MCF 10A (cell line): ENCODE measurements at regions of chr1 and their contacts with region 1.

Region 1: GRCh38 chr1:153967082-153968000 is at the start of gene CREB3L4:
- DNase-seq: peak; percentile 100
- H3K4me3 Mint-ChIP-seq: peak within 1 kb of the TSS; percentile 95
- H3K27ac Mint-ChIP-seq: peak within 1 kb of the TSS; percentile 94
- H3K4me1 Mint-ChIP-seq: peaks cover 40% of the 10 kb centered on the region
- H3K27me3 Mint-ChIP-seq: no peaks in the 10 kb centered on the region
- CTCF ChIP-seq: peak; percentile 32
- total RNA-seq, gene CREB3L4: 14.7 and 17.6 TPM in 2 replicates

Region 2: GRCh38 chr1:153775458-153776327 is 191.6 kb before region 1 on chr1:
- CTCF ChIA-PET with region 1: interaction called, 3 read pairs
- POLR2A ChIA-PET with region 1: interaction called, 37 read pairs
- intact Hi-C with region 1: no loop called
- DNase-seq: peak; percentile 81
- H3K4me3 Mint-ChIP-seq: peak overlapping the region; percentile 70
- H3K27ac Mint-ChIP-seq: peak overlapping the region; percentile 68
- H3K4me1 Mint-ChIP-seq: peaks cover 36% of the 10 kb centered on the region
- H3K27me3 Mint-ChIP-seq: no peaks in the 10 kb centered on the region
- CTCF ChIP-seq: no peak

Region 3: DNA sequence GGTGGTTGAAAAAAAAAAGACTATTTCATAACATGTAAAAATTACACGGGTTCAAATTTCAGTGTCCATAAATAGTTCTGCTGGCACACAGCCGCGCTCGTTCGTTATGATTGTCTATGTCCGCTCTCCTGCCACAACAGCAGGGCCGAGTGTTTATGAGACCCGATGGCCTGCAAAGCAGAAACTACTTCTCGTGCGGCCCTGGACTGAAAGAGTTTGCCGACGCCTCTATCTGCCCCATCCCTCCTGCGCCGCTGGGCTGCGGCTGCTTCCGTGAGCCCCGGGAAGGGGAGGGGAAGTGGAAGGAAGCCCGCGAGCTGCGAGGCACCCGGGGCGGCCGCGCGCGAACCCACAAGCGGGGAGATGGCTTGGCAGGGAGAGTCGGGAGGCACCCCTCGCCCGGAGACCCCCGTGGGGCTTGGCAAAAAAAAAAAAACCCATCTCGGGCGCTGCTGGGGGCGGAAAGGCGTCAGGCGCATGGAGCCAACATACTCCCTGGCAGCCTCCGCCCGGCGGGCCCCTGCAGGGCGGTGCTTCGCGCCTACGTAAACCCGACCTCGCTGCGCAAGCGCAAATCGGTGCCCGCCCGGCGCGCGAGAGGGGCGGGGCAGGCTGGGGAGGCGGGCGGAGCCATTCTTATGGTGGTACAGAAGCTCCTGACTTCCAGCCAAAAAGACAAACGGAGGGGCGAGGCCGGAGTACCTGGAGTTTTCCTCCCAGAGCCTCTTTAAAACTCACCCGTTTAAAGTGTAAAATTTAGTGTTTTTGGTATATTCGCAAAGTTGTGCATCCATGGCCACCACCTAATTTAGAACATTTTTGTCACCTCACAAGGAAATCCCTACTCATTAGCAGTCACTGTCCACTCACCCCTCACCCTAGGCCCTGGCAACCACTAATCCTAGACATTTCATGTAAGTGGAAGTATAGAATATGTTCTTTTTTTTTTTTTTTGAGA is 183.8 kb before region 1 on chr1:
- CTCF ChIA-PET with region 1: interaction called, 3 read pairs
- POLR2A ChIA-PET with region 1: interaction called, 37 read pairs
- intact Hi-C with region 1: no loop called
- DNase-seq: peak; percentile 92
- H3K4me3 Mint-ChIP-seq: peak overlapping the region; percentile 94
- H3K27ac Mint-ChIP-seq: peak overlapping the region; percentile 84
- H3K4me1 Mint-ChIP-seq: peaks cover 4% of the 10 kb centered on the region
- H3K27me3 Mint-ChIP-seq: peaks cover 13% of the 10 kb centered on the region
- CTCF ChIP-seq: no peak

Region 4: GRCh38 chr1:153977250-153978240 is 10.2 kb after region 1 on chr1 and contains the start of gene JTB:
- CTCF ChIA-PET with region 1: interaction called, 32 read pairs
- POLR2A ChIA-PET with region 1: interaction called, 647 read pairs
- intact Hi-C with region 1: no loop called
- DNase-seq: peak; percentile 93
- H3K4me3 Mint-ChIP-seq: peak within 1 kb of the TSS; percentile 98
- H3K27ac Mint-ChIP-seq: peak within 1 kb of the TSS; percentile 96
- H3K4me1 Mint-ChIP-seq: peaks cover 23% of the 10 kb centered on the region
- H3K27me3 Mint-ChIP-seq: no peaks in the 10 kb centered on the region
- CTCF ChIP-seq: no peak
- total RNA-seq, gene JTB: 194 and 224 TPM in 2 replicates

Region 5: DNA sequence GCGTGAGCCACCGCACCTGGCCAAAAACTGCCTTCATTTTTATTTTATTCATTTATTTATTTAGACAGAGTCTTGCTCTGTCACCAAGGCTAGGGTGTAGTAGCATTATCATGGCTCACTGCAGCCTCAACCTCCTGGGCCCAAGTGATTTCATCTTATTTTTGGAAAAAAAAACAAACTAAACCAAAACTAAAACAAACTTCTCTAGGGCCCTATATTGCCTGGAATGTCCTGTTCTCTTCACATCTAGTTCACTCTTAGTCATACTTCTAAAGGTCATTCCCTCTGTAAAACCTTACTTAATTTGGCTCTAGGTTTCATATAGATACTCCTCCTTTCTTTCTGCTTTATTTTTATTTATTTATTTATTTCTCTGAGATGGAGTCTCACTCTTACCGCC is 38.8 kb after region 1 on chr1:
- CTCF ChIA-PET with region 1: no interaction called
- POLR2A ChIA-PET with region 1: no interaction called
- intact Hi-C with region 1: no loop called
- DNase-seq: peak; percentile 30
- H3K4me3 Mint-ChIP-seq: no peak overlapping the region
- H3K27ac Mint-ChIP-seq: no peak overlapping the region
- H3K4me1 Mint-ChIP-seq: no peaks in the 10 kb centered on the region
- H3K27me3 Mint-ChIP-seq: no peaks in the 10 kb centered on the region
- CTCF ChIP-seq: no peak